CD8-positive, alpha-beta memory T cell (primary cell): ENCODE measurements at regions of chr17 and their contacts with region 1.

Region 1: DNA sequence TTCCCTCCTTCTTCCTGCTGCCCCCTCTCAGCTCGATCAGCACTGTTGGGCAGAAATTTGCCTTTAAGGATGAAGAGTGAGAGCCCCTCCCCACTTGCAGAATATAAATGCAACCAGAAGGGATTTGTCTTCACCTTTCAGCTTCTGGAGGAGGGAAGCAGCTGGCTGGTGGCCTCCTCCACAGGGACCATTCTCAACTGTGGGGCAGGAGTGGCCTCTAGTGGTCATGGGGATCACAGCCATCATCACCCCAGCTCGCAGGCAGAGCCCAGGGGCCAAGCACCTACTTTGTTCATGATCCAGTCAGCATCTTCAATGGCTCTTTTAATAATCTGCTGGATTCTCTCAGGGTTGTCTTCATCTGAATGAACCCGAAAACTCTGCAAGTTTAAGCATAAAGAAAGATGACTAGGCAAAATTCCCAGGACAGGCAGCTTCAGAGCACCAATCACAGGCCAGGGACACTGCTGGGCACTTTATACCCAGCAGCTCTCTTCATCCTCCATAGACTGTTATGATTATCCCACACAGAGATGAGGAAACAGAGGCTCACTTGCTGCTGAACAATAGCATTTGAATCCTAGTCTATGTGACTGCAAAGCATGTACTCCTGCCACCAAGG is 13.1 kb downstream of the LYRM9 start:
- DNase-seq: peak; percentile 39 to 71 (median 44)
- H3K4me3 ChIP-seq: no peak overlapping the region
- H3K4me3 Mint-ChIP-seq: no peak overlapping the region
- H3K27ac ChIP-seq: no peak overlapping the region
- H3K27ac Mint-ChIP-seq: peak overlapping the region in 2 of 8 donors; percentile 12 to 38
- H3K4me1 ChIP-seq: peaks cover 17% of the 10 kb centered on the region
- H3K4me1 Mint-ChIP-seq: peaks cover 11 to 21% (median 16%) of the 10 kb centered on the region in 3 donors
- H3K27me3 ChIP-seq: no peaks in the 10 kb centered on the region
- H3K27me3 Mint-ChIP-seq: no peaks in the 10 kb centered on the region

Region 2: DNA sequence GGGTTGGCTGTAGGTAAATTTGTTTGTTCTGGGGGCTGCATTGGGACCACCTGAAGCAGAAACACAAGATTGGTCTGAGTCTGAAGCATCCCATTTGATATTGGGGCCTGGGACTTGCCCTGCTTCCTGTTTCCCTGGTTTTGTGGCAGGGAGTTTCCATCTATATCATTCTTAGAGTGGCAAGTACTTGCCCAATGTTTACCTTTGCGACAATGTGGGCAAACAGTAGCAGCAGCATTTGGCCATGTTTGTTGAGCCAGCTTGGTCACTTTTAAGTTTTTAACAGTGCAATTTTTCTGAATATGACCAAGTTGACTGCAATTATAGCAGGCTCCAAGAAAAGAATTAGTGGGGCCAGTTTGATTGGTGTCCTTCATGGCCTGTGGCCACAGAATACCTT is 187.3 kb before region 1 on chr17:
- CTCF ChIA-PET with region 1: no interaction called
- POLR2A ChIA-PET with region 1: no interaction called
- DNase-seq: no peak
- H3K4me3 ChIP-seq: no peak overlapping the region
- H3K4me3 Mint-ChIP-seq: no peak overlapping the region
- H3K27ac ChIP-seq: no peak overlapping the region
- H3K27ac Mint-ChIP-seq: no peak overlapping the region
- H3K4me1 ChIP-seq: no peaks in the 10 kb centered on the region
- H3K4me1 Mint-ChIP-seq: no peaks in the 10 kb centered on the region
- H3K27me3 ChIP-seq: no peaks in the 10 kb centered on the region
- H3K27me3 Mint-ChIP-seq: peaks cover 7 to 22% of the 10 kb centered on the region in 2 donors

Region 3: GRCh38 chr17:27760069-27760885 is 119.8 kb before region 1 on chr17:
- CTCF ChIA-PET with region 1: interaction called, 37 read pairs
- POLR2A ChIA-PET with region 1: no interaction called
- DNase-seq: peak; percentile 40 to 76 (median 60)
- H3K4me3 ChIP-seq: no peak overlapping the region
- H3K4me3 Mint-ChIP-seq: no peak overlapping the region
- H3K27ac ChIP-seq: no peak overlapping the region
- H3K27ac Mint-ChIP-seq: no peak overlapping the region
- H3K4me1 ChIP-seq: no peaks in the 10 kb centered on the region
- H3K4me1 Mint-ChIP-seq: no peaks in the 10 kb centered on the region
- H3K27me3 ChIP-seq: no peaks in the 10 kb centered on the region
- H3K27me3 Mint-ChIP-seq: peaks cover 2 to 11% of the 10 kb centered on the region in 2 donors

Region 4: GRCh38 chr17:27800522-27800921 is 79.6 kb before region 1 on chr17 and contains the start of gene NOS2:
- CTCF ChIA-PET with region 1: interaction called, 195 read pairs
- POLR2A ChIA-PET with region 1: interaction called, 6 read pairs
- DNase-seq: no peak
- H3K4me3 ChIP-seq: no peak within 1 kb of the TSS
- H3K4me3 Mint-ChIP-seq: no peak within 1 kb of the TSS
- H3K27ac ChIP-seq: no peak within 1 kb of the TSS
- H3K27ac Mint-ChIP-seq: peak within 1 kb of the TSS in 1 of 8 donors; percentile 79
- H3K4me1 ChIP-seq: peaks cover 4% of the 10 kb centered on the region
- H3K4me1 Mint-ChIP-seq: peaks cover 4% of the 10 kb centered on the region in 3 donors
- H3K27me3 ChIP-seq: no peaks in the 10 kb centered on the region
- H3K27me3 Mint-ChIP-seq: peaks cover 22 to 32% of the 10 kb centered on the region in 2 donors
- total RNA-seq, gene NOS2: 0.07 TPM in 1 of 2 experiments, not detected in the other

Region 5: DNA sequence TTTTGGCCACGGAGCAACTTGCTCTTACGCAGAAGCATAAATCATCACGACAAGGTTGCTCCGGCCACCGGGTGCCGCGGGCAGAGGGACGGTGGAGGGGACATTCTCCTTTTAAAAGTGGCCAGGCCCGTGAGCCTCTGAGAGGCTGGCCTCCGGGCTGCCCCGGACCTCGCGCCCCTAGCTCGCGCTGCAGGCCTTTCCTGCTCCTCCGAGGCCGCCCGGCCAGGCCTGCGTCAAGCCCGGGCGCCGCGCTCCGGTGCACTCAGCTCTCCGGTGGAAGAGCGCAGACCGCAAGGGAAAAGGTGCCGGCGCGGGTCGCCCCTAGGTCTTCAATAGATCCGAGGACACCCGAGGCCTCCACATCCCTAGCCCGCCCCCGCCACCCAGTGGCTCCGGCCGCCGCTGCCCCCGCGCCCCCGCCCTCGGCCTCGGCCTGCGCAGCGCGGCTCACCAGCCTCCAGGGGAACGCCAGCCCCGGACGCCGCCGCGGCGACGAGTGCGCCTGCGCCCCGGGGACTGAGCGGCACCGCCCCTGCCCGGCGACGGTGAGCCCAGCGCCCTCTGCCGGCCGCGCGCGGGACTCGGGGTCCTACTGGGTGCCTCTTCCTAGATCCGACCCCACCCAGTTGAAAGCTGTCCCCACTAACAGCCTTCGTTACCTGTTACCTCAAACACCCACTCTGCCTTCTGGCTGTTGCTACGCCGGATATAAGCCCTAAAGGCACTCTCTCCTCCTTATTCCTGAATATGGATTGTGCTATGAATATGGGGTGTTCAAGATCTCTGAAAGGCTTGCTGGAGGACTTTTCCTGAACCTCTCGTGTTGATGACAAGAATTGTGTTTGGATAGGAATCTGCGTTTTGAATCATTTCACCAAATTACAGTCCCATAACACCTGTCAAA is 13.0 kb after region 1 on chr17 and contains the start of gene LYRM9:
- CTCF ChIA-PET with region 1: interaction called, 31 read pairs
- POLR2A ChIA-PET with region 1: interaction called, 4 read pairs
- DNase-seq: peak; percentile 92 to 94 (median 93)
- H3K4me3 ChIP-seq: peak within 1 kb of the TSS; percentile 73
- H3K4me3 Mint-ChIP-seq: peak within 1 kb of the TSS; percentile 79 to 93 (median 86)
- H3K27ac ChIP-seq: peak within 1 kb of the TSS; percentile 58
- H3K27ac Mint-ChIP-seq: peak within 1 kb of the TSS; percentile 26 to 86 (median 76)
- H3K4me1 ChIP-seq: no peaks in the 10 kb centered on the region
- H3K4me1 Mint-ChIP-seq: peaks cover 17 to 24% (median 23%) of the 10 kb centered on the region in 3 donors
- H3K27me3 ChIP-seq: peaks cover 4% of the 10 kb centered on the region
- H3K27me3 Mint-ChIP-seq: peaks cover 14 to 28% of the 10 kb centered on the region in 2 donors
- total RNA-seq, gene LYRM9: 2.5 to 3.4 TPM

Region 6: GRCh38 chr17:27929990-27930389 is 49.9 kb after region 1 on chr17:
- CTCF ChIA-PET with region 1: no interaction called
- POLR2A ChIA-PET with region 1: no interaction called
- DNase-seq: no peak
- H3K4me3 ChIP-seq: no peak overlapping the region
- H3K4me3 Mint-ChIP-seq: no peak overlapping the region
- H3K27ac ChIP-seq: no peak overlapping the region
- H3K27ac Mint-ChIP-seq: no peak overlapping the region
- H3K4me1 ChIP-seq: no peaks in the 10 kb centered on the region
- H3K4me1 Mint-ChIP-seq: no peaks in the 10 kb centered on the region
- H3K27me3 ChIP-seq: no peaks in the 10 kb centered on the region
- H3K27me3 Mint-ChIP-seq: peaks cover 15 to 28% of the 10 kb centered on the region in 2 donors